ENCODE measurements at regions of chr1 and their contacts with region 1.

Region 1: GRCh38 chr1:111582644-111583618 is 36.7 kb upstream of the RAP1A start:
- DNase-seq: no peak
- H3K4me3 ChIP-seq: no peak overlapping the region
- H3K27ac ChIP-seq: no peak overlapping the region
- H3K4me1 ChIP-seq: peaks cover 1% of the 10 kb centered on the region
- H3K27me3 ChIP-seq: no peaks in the 10 kb centered on the region
- CTCF ChIP-seq: no peak
- EP300 ChIP-seq: no peak
- POLR2A ChIP-seq: no peak

Region 2: DNA sequence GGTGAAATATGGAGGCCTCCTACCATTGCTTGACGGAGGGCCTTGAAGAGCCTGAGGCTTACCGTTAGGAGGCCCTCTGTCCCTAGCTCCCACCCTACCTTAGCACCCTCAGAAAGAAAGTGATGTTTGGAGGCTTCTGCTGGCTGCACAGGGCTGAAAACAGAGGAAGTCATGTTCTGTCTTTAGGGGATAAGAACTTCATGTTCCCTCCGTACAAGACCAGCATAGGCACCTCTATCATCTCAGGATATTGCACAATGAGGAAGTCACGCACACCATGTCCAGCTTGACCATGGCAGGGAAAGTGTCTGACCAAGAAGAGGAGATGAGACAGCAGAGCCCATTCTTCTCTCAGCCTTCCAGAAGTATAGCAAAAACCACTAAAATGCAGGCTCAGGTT is 93.3 kb before region 1 on chr1:
- intact Hi-C with region 1: no loop called
- DNase-seq: no peak
- H3K4me3 ChIP-seq: no peak overlapping the region
- H3K27ac ChIP-seq: no peak overlapping the region
- H3K4me1 ChIP-seq: no peaks in the 10 kb centered on the region
- H3K27me3 ChIP-seq: no peaks in the 10 kb centered on the region
- CTCF ChIP-seq: no peak
- EP300 ChIP-seq: no peak
- POLR2A ChIP-seq: no peak

Region 3: DNA sequence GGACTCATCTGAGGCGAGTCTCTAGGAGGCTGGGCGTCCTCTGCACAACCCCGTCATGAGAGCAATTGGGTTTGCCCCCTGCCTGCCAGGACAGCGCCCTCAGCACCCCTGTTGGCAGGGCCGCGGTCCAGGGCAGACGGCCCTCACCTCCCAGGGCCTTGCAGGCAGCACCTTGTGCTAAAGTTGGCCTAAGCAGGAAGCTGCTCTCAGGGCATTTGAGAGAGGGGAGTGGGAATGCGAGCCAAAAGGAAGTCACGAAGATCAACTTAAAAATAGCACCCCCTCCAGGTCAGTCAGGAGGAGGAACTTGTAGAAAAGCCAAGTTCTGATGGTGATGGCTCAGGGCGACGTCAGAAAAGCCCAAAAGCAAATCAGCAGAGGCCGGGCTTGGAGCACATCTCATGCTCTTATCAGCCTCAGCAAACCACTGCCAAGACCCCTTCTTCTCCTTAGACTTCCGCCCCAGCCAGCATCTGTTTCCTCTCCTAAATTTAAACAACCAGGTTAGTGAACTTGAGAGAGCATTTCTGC is 66.9 kb before region 1 on chr1:
- intact Hi-C with region 1: loop called in 1 of 4 experiments (anchors 10 kb)
- DNase-seq: peak; percentile 64 to 72 (median 69)
- H3K4me3 ChIP-seq: peak overlapping the region; percentile 25
- H3K27ac ChIP-seq: peak overlapping the region; percentile 44 to 53
- H3K4me1 ChIP-seq: peaks cover 13% of the 10 kb centered on the region
- H3K27me3 ChIP-seq: no peaks in the 10 kb centered on the region
- CTCF ChIP-seq: peak in 1 of 3 donors; percentile 36
- EP300 ChIP-seq: no peak
- POLR2A ChIP-seq: no peak

Measured in ovary (tissue), 10 donors.